ENCODE measurements at regions of chr15 and their contacts with region 1.

Region 1: DNA sequence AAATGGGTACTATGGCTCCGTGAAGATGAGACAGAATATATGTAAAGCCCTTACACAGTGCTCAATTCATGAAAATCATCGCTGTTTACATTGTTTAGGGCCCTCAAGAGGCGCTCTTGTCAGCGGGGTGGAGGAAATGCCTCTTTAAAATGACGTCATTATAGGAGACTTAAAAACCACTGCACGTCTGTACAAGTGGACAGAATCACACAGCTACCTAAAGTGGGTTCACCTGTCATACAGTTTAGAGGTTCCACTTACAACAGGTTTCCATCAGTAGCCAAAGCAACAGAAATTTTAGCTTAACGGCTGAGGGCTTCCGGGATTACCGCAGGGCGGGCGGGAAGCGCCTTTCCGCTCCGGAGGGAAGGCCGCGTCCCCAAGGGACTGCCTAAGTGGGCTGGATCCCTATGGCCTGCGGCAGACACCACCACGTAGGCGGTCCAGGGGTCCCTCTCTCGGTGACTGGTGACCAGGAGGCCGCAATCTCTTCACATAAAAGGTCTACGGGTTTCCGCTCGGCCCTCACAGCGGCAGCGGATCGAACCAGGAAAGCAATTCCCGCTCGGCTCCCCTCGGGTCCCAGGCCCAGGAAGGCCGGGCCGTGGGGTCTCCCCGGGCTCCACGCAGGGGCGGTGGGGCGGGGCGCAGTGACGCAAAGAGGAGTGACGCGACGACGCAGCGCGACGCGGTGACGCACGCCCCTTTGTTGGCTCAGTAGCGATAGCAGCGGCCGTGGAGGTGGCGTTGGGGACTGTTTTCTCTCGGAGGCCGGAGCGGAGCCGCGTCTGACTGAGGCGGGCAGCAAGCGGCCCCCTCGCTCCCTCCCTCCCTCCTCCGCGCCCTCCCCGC is at the start of gene ARIH1:
- DNase-seq: peak; percentile 97
- ATAC-seq: peak; percentile 96 to 98
- total RNA-seq, gene ARIH1: 141 to 142 TPM

Region 2: GRCh38 chr15:72375847-72376581 is 97.8 kb before region 1 on chr15 and contains the start of gene HEXA:
- intact Hi-C with region 1: loop called in 1 of 2 experiments (anchors 10 kb)
- DNase-seq: peak; percentile 98
- ATAC-seq: peak; percentile 98
- total RNA-seq, gene HEXA: 78.2 to 82.3 TPM

Region 3: DNA sequence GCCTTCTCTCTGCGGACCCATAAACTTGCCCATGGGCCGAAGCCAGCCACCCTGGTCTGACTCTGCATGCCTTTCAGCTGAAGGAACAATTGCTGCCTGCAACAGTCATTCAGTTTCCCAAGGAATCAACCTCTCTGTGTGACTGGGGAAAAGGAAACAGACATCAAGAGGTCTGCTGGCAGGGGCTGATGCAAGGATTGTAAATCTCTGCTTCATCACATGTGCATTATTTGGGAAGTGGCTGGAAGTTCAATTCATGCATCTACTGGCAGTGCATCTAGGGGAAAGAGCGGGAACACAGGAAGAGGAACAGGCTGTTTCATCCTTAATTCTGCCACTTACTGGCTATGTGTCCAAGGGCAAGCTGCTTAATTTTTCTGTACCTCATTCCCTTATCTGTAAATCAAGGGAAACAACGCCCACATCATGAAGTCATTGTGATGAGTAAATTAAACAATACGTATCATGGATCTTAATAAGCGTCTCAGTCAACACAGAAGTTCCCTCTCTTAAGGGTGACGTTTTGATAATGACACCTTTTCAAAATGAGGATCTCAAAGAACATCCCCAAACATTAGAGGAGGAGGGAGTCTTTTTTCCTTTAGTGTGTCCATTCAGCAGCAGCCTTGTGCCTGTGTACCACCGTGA is 327.1 kb after region 1 on chr15:
- intact Hi-C with region 1: no loop called
- DNase-seq: no peak
- ATAC-seq: no peak

Measured in left cardiac atrium (tissue), 4 donors.